ENCODE measurements at regions of chr9 and their contacts with region 1.

Region 1: DNA sequence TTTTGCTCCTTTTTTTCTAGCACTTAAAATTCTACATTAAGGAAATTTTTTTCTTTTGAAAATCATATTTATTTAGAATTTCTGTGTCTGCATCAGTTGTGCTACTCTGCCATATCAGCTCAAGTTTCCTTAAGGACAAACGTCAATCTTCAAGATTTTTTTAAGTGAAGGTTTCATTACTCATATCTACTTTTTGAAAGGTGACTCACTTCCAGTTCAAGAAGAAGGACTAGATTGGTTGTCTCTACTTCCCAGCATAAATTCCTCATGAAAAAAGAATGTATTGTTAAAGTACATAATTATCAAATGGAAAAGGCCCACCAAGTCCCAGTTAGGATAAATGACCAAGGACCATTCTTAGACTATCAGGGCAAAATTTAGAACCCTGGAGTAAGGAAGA is 626.5 kb downstream of the DMRTA1 start:
- DNase-seq: no peak
- H3K4me3 ChIP-seq: no peak overlapping the region
- H3K4me1 ChIP-seq: no peaks in the 10 kb centered on the region
- H3K27me3 ChIP-seq: no peaks in the 10 kb centered on the region

Region 2: DNA sequence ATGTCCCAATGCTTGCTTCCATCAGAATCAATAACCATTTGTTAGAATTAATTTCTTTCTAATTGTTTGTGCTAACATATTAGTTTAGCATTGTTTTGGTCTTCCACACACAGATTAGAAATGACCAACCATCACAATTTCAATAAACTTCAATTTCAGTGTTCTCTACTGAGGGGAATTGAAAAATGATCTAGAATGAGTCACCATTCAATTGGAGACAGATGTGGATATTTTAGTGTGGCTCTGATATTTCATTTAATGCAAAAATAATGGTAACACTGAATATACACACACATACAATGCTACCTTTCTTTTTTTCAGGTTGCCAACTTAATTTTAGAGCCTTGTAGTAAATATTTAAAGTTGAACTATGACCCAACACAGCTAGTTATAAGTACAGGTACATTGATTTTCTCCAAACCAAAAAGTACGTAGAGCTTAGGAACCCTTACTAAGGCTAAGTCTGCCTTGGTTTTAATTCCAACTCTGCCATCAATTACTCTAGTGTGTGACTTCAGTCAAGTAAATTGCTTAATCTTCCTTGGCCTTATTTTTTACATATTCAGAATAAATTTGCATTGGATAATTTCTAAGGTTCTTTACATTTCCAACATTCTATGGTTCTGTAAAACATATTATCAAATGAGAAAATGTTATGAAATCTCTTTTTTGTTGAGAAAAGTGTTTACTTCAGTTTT is 482.7 kb before region 1 on chr9:
- in situ Hi-C with region 1: no loop called
- DNase-seq: no peak
- H3K4me3 ChIP-seq: no peak overlapping the region
- H3K4me1 ChIP-seq: no peaks in the 10 kb centered on the region
- H3K27me3 ChIP-seq: no peaks in the 10 kb centered on the region

Region 3: GRCh38 chr9:23123048-23123632 is 50.0 kb after region 1 on chr9:
- in situ Hi-C with region 1: no loop called
- DNase-seq: peak; percentile 46 to 65
- H3K4me3 ChIP-seq: no peak overlapping the region
- H3K4me1 ChIP-seq: no peaks in the 10 kb centered on the region
- H3K27me3 ChIP-seq: no peaks in the 10 kb centered on the region

Region 4: GRCh38 chr9:23153058-23153457 is 79.9 kb after region 1 on chr9:
- in situ Hi-C with region 1: loop called (anchors 25 kb)
- DNase-seq: peak in 1 of 2 experiments; percentile 26
- H3K4me3 ChIP-seq: no peak overlapping the region
- H3K4me1 ChIP-seq: no peaks in the 10 kb centered on the region
- H3K27me3 ChIP-seq: no peaks in the 10 kb centered on the region

Measured in HAP-1 (cell line).